OCI-LY7 (cell line): ENCODE measurements at regions of chr9 and their contacts with region 1.

Region 1: GRCh38 chr9:114738581-114739316 is 56.8 kb upstream of the TEX48 start:
- DNase-seq: peak; percentile 78
- H3K4me3 ChIP-seq: no peak overlapping the region
- H3K27ac ChIP-seq: no peak overlapping the region
- H3K4me1 ChIP-seq: no peaks in the 10 kb centered on the region
- CTCF ChIP-seq: peak; percentile 98

Region 2: GRCh38 chr9:113868501-113868900 is 870.2 kb before region 1 on chr9:
- CTCF ChIA-PET with region 1: no interaction called
- POLR2A ChIA-PET with region 1: no interaction called
- intact Hi-C with region 1: no loop called
- DNase-seq: no peak
- H3K4me3 ChIP-seq: no peak overlapping the region
- H3K27ac ChIP-seq: no peak overlapping the region
- H3K4me1 ChIP-seq: no peaks in the 10 kb centered on the region
- CTCF ChIP-seq: no peak

Region 3: GRCh38 chr9:114681594-114682332 is 57.0 kb before region 1 on chr9 and contains the start of gene TEX48:
- CTCF ChIA-PET with region 1: no interaction called
- POLR2A ChIA-PET with region 1: interaction called, 3 read pairs
- intact Hi-C with region 1: loop called (anchors 1 kb)
- DNase-seq: peak; percentile 74
- H3K4me3 ChIP-seq: no peak within 1 kb of the TSS
- H3K27ac ChIP-seq: no peak within 1 kb of the TSS
- H3K4me1 ChIP-seq: peaks cover 4% of the 10 kb centered on the region
- CTCF ChIP-seq: peak; percentile 84
- total RNA-seq, gene TEX48: not detected in 2 replicates

Region 4: GRCh38 chr9:114869845-114870244 is 131.1 kb after region 1 on chr9:
- CTCF ChIA-PET with region 1: no interaction called
- POLR2A ChIA-PET with region 1: no interaction called
- intact Hi-C with region 1: no loop called
- DNase-seq: peak; percentile 28
- H3K4me3 ChIP-seq: no peak overlapping the region
- H3K27ac ChIP-seq: no peak overlapping the region
- H3K4me1 ChIP-seq: peaks cover 6% of the 10 kb centered on the region
- CTCF ChIP-seq: no peak

Region 5: DNA sequence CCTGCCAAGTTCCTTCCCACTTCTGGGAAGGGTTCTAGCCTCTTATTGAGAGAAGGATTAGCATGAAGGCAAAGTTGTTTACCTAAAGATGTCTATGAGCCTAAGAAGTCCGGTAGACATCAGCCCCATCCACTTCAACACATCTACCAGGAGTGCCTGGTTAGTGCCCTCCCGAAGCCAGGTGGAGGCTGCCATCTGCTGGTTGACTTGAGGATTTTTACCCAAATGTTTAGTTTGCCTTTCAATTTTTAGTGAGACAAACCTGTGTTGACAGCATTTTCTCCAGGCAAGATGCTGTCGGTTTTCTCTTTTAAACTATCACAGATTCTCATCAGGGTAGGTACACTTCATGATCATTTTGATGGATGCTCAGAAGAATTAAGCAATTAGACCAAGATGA is 275.2 kb after region 1 on chr9:
- CTCF ChIA-PET with region 1: interaction called, 3 read pairs
- POLR2A ChIA-PET with region 1: interaction called, 6 read pairs
- intact Hi-C with region 1: loop called (anchors 1 kb)
- DNase-seq: peak; percentile 83
- H3K4me3 ChIP-seq: no peak overlapping the region
- H3K27ac ChIP-seq: no peak overlapping the region
- H3K4me1 ChIP-seq: peaks cover 4% of the 10 kb centered on the region
- CTCF ChIP-seq: peak; percentile 95

Region 6: DNA sequence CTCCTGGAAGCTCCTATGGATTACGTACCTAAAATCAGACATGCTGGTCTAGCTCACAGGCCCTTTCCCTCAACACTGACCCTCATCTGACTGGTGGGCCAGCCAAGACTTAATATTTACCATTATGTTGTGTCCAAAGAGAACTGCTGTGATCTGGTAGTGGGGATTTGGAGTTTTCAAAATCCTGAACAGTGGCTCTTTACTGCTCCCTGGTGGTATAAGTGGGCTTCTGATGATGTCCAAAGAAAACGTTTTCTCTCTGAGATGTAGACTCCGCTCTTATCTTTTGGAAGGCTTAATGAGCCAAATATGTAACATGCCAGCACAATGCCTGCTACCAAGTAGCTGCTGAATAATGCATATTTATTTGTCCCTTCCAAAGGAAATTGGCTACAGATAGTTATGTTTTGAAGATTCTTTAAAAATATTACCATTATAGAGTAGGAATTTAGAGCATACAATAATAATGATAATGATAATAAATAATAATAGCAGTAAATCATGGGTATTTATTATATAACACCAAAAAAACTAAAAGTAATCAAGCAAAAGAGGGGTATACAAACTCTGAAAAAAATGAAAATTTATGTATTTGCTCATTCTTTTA is 785.8 kb after region 1 on chr9:
- CTCF ChIA-PET with region 1: no interaction called
- POLR2A ChIA-PET with region 1: no interaction called
- intact Hi-C with region 1: loop called (anchors 5 kb)
- DNase-seq: peak; percentile 27
- H3K4me3 ChIP-seq: no peak overlapping the region
- H3K27ac ChIP-seq: no peak overlapping the region
- H3K4me1 ChIP-seq: no peaks in the 10 kb centered on the region
- CTCF ChIP-seq: peak; percentile 81